ENCODE measurements at regions of chr12 and their contacts with region 1.

Region 1: GRCh38 chr12:123910761-123911193 is 61.9 kb downstream of the CCDC92 start:
- DNase-seq: no peak
- ATAC-seq: peak; percentile 26; the same call in 2 of the 3 replicates
- H3K4me3 ChIP-seq: no peak overlapping the region
- H3K27ac ChIP-seq: no peak overlapping the region
- H3K4me1 ChIP-seq: peaks cover 0 to 9% of the 10 kb centered on the region in 2 experiments; a peak in 2 of 5 replicates
- H3K27me3 ChIP-seq: peaks cover 23 to 44% of the 10 kb centered on the region in 2 experiments
- CTCF ChIP-seq: no peak
- EP300 ChIP-seq: no peak
- POLR2A ChIP-seq: no peak
- RAD21 ChIP-seq: no peak

Region 2: GRCh38 chr12:123645878-123646277 is 264.9 kb before region 1 on chr12:
- CTCF ChIA-PET with region 1: no interaction called
- POLR2A ChIA-PET with region 1: no interaction called
- in situ Hi-C with region 1: no loop called
- intact Hi-C with region 1: no loop called
- DNase-seq: no peak
- ATAC-seq: no peak
- H3K4me3 ChIP-seq: no peak overlapping the region
- H3K27ac ChIP-seq: no peak overlapping the region
- H3K4me1 ChIP-seq: no peaks in the 10 kb centered on the region
- H3K27me3 ChIP-seq: no peaks in the 10 kb centered on the region
- CTCF ChIP-seq: no peak
- EP300 ChIP-seq: no peak
- POLR2A ChIP-seq: no peak
- RAD21 ChIP-seq: no peak

Region 3: DNA sequence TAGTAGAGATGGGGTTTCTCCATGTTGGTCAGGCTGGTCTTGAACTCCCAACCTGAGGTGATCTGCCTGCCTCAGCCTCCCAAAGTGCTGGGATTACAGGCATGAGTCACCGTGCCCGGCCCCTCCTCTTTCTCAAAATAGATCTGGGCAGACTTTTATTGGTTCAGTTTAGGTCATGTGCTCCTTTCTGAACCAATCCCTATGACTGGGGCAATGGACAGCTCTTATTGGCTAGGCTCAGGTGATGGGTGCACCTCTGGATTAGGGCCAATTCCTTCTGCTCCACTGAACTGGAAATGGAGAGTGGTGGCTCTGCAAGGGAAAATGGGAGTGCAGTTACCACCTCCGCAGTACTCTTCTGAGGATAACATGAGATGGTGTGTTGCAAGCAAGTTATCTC is 204.8 kb before region 1 on chr12:
- CTCF ChIA-PET with region 1: no interaction called
- POLR2A ChIA-PET with region 1: no interaction called
- in situ Hi-C with region 1: no loop called
- intact Hi-C with region 1: no loop called
- DNase-seq: peak in 2 of 4 experiments; percentile 38 to 53
- ATAC-seq: peak; percentile 88
- H3K4me3 ChIP-seq: no peak overlapping the region
- H3K27ac ChIP-seq: no peak overlapping the region
- H3K4me1 ChIP-seq: peaks cover 0 to under 1% of the 10 kb centered on the region in 2 experiments; a peak in 2 of 5 replicates
- H3K27me3 ChIP-seq: no peaks in the 10 kb centered on the region
- CTCF ChIP-seq: no peak
- EP300 ChIP-seq: no peak
- POLR2A ChIP-seq: no peak
- RAD21 ChIP-seq: no peak

Region 4: DNA sequence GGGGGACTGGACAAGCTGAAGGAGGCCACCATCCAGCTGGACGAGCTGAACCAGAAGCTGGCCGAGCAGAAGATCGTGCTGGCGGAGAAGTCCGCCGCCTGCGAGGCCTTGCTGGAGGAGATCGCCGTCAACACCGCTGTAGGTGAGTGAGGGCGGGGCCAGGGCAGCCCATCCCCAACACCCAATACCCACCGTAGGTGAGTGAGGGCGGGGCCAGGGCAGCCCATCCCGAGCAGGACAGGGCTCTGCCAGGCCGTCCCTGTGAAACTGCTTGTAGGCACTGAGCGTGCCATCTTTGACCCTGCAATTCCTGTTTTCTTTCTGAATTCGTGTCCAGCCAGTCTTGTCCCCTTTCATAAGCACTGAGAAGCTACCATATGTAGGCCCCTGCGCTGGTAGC is 12.1 kb before region 1 on chr12:
- CTCF ChIA-PET with region 1: no interaction called
- POLR2A ChIA-PET with region 1: interaction called, 10 read pairs
- in situ Hi-C with region 1: no loop called
- intact Hi-C with region 1: no loop called
- DNase-seq: no peak
- ATAC-seq: no peak
- H3K4me3 ChIP-seq: no peak overlapping the region
- H3K27ac ChIP-seq: no peak overlapping the region
- H3K4me1 ChIP-seq: peaks cover 0 to 5% of the 10 kb centered on the region in 2 experiments; a peak in 1 of 5 replicates
- H3K27me3 ChIP-seq: peaks cover 65 to 81% of the 10 kb centered on the region in 2 experiments
- CTCF ChIP-seq: no peak
- EP300 ChIP-seq: no peak
- POLR2A ChIP-seq: no peak
- RAD21 ChIP-seq: no peak

Measured in K562 (cell line).